ENCODE measurements at regions of chr3 and their contacts with region 1.

Region 1: DNA sequence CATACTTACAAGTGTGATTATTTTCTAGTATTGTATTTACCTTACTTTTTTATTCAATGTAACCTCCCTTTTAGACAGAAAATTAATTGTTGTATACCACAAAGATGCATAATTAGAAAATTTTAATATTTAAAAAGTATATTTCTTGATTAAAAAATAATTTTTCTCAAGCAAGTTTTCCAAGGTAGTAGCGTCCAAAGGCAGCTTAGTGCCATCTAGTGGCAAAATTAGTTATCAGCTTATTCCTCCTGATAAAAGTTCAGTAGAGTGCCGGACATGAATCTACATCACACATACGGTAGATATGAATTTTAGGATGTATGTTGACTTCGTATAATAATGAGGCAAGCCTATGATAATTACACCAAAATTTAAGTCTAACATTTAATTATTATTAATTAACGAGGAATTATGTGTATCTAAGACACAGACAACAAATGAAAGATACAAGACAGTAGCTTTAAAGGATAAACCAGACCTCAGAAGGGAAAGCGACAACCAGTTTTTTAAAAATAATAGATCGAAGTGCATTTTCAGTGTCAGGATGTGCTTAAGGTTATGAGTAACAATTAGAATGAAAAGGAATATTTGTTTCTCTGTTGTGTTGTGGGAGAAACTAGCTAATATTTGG is 405.9 kb downstream of the ROBO1 start:
- DNase-seq: no peak
- H3K4me3 ChIP-seq: no peak overlapping the region
- CTCF ChIP-seq: peak; percentile 44

Region 2: GRCh38 chr3:79086514-79086913 is 275.3 kb before region 1 on chr3:
- CTCF ChIA-PET with region 1: interaction called, 172 read pairs
- POLR2A ChIA-PET with region 1: no interaction called
- DNase-seq: peak; percentile 5
- H3K4me3 ChIP-seq: no peak overlapping the region
- CTCF ChIP-seq: peak; percentile 80

Region 3: GRCh38 chr3:79167651-79168416 is 194.0 kb before region 1 on chr3:
- CTCF ChIA-PET with region 1: no interaction called
- POLR2A ChIA-PET with region 1: no interaction called
- DNase-seq: peak; percentile 70
- H3K4me3 ChIP-seq: no peak overlapping the region
- CTCF ChIP-seq: no peak

Region 4: DNA sequence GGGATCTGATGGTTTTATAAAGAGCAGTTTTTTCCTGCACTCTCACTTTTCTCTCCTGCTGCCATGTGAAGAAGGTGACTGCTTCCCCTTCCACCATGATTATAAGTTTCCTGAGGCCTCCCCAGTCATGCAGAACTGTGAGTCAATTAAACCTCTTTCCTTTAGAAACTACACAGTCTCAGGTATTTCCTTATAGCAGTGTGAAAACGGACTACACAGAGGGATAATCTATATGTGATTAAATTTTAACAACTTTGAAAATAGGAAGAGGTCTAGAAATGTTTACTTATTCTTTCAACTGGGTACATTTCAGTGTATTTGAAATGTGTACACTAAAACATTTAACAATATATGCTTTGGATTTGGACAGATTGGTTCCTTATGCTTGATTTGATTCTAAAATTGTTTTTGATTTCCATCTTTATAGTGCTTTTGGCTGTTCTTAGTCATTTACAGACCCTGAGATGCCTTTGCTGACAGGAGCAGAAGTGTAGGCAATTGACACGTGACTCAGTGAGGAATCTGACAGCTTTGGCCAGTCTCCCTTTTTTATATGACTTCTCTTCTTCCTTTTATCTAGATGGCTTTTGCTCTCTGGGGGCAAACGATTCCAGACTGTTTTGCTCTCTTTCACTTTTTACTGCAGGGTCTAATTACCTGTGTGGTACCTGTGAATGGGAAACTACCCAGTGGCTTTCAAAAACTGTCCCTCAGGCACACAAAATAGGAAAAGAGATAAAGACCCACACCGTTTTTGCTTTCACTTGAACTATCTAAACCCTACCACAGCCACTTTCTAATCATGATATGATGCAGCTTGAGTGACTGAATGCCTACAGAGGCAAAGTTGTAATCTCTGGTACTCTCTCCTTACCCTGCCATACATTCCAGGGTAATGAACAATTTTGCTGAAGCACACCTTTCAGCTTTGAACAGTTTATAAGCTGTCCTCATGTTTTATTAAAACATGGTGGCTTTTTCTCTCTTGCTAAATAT is 16.7 kb before region 1 on chr3:
- CTCF ChIA-PET with region 1: interaction called, 16 read pairs
- POLR2A ChIA-PET with region 1: no interaction called
- DNase-seq: no peak
- H3K4me3 ChIP-seq: no peak overlapping the region
- CTCF ChIP-seq: no peak

Region 5: GRCh38 chr3:79351699-79352098 is 10.2 kb before region 1 on chr3:
- CTCF ChIA-PET with region 1: interaction called, 16 read pairs
- POLR2A ChIA-PET with region 1: no interaction called
- DNase-seq: no peak
- H3K4me3 ChIP-seq: no peak overlapping the region
- CTCF ChIP-seq: no peak